ENCODE measurements at regions of chr9 and their contacts with region 1.

Region 1: GRCh38 chr9:93682232-93682968 is 106.0 kb downstream of the PHF2 start:
- DNase-seq: peak; percentile 47 to 74
- H3K4me3 ChIP-seq: no peak overlapping the region
- H3K27ac ChIP-seq: no peak overlapping the region
- H3K4me1 ChIP-seq: no peaks in the 10 kb centered on the region
- H3K27me3 ChIP-seq: no peaks in the 10 kb centered on the region
- CTCF ChIP-seq: peak; percentile 68 to 77

Region 2: DNA sequence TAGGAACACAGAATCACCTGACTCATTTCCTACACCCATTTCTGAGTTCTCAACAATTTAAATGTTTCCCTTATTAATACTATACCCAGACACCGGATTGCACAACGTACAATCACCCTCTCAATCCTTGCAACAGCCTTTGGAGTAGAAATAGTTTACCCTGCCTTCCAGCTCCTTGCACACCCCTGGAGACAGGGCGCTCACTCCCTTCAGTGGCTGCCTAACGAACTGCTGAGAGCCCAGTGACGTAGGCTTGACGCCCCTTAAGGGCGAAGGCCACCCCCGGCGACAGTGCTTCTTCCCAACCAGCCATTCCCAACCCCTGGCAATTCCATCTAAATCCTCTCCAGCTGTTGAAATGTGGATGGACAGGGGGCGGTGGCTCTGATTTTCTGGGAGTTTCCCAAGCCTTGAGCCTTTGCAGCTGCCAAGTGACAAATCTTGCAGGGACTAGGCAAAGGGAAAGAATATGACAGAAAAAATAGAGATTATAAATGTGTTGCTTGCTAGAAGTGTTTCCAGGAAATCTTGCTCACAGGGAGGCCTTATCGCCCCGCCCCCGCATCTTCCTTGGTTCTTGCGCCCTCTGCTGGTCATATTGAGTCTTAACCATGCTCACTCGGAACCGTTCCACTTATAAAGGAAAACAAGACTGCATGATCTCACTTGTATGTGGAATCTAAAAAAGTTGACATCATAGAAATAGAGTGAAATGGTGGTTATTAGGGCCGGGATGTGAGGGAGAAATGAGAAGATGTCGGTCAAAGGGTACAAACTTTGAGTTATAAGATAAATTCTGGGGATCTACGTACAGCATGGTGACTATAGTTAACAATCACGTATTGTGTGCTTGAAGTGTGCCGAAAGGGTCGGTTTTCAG is 280.4 kb after region 1 on chr9:
- intact Hi-C with region 1: loop called (anchors 5 kb)
- DNase-seq: peak; percentile 76 to 88
- H3K4me3 ChIP-seq: peak overlapping the region in 1 of 2 donors; percentile 15
- H3K27ac ChIP-seq: no peak overlapping the region
- H3K4me1 ChIP-seq: peaks cover 0 to 43% (median 33%) of the 10 kb centered on the region in 4 donors
- H3K27me3 ChIP-seq: peaks cover 4 to 57% of the 10 kb centered on the region in 2 donors
- CTCF ChIP-seq: peak; percentile 76 to 79

Region 3: DNA sequence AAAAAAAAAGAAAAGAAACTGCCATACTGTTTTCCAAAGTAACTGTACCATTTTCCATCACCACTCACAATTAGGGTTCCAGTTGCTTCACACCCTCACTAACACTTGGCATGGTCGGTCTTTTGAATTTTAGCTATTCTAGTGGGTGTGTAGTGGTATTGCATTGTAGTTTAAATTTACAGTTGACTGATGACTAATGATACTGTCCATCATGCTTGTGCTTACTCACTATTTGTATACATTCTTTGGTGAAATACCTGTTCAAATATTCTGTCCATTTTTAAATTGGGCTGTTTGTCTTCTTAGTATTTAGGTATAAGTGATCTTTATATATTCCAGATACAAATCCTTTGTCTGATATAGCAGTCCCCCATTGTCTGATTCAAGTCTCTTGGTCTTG is 540.5 kb after region 1 on chr9:
- intact Hi-C with region 1: loop called (anchors 10 kb)
- DNase-seq: no peak
- H3K4me3 ChIP-seq: no peak overlapping the region
- H3K27ac ChIP-seq: no peak overlapping the region
- H3K4me1 ChIP-seq: no peaks in the 10 kb centered on the region
- H3K27me3 ChIP-seq: no peaks in the 10 kb centered on the region
- CTCF ChIP-seq: no peak